ENCODE measurements at regions of chr19 and their contacts with region 1.

Region 1: DNA sequence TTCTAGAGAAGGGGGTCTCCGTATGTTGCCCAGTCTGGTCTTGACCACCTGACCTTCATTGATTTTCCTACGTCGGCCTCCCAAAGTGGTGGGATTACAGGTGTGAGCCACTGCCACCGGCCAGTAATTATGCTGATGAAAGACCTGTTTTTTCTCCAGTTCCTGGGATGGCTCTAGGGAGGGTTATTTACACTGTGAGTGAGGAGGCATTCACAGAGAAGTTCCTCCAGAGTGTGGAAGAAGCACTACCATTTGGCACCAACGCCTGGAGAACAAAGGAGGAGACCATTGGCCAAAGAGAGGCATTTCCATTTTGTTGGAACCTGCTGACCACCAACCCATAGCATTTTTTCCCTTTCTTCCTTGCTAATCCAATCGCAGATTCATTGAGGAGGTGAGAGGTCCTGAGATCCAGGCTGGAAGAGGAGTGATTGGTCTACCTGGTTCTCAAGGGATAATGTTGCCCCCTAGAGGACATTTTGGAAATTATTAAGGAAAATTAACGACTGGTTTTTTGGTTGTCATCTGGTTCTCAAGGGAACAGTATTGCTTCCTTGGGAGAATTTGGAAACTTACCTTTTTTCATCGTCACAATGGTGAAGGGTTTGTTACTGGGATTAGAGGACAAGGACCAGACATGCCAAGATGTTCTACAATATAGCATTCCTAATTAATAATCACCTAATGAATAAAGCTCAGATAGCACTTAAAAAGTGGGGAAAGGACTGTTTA is 5.5 kb upstream of the SAE1 start:
- DNase-seq: no peak
- ATAC-seq: peak; percentile 44 to 85 (median 78)
- H3K4me3 ChIP-seq: no peak overlapping the region
- H3K27ac ChIP-seq: no peak overlapping the region
- H3K4me1 ChIP-seq: peaks cover 0 to 5% (median 0%) of the 10 kb centered on the region in 12 donors
- H3K27me3 ChIP-seq: no peaks in the 10 kb centered on the region
- CTCF ChIP-seq: peak; percentile 58 to 84 (median 73)
- POLR2A ChIP-seq: no peak

Region 2: GRCh38 chr19:46850228-46851203 is 274.6 kb before region 1 on chr19 and contains the start of gene AP2S1:
- intact Hi-C with region 1: loop called in 1 of 10 experiments (anchors 10 kb)
- DNase-seq: peak; percentile 93 to 97 (median 97)
- ATAC-seq: peak; percentile 92 to 97 (median 96)
- H3K4me3 ChIP-seq: peak within 1 kb of the TSS; percentile 66 to 97 (median 79)
- H3K27ac ChIP-seq: peak within 1 kb of the TSS; percentile 40 to 92 (median 86)
- H3K4me1 ChIP-seq: peaks cover 0 to 32% (median 12%) of the 10 kb centered on the region in 12 donors
- H3K27me3 ChIP-seq: no peaks in the 10 kb centered on the region
- CTCF ChIP-seq: peak in 1 of 12 donors; percentile 17
- POLR2A ChIP-seq: peak in 1 of 2 donors; percentile 78
- total RNA-seq, gene AP2S1: 75.3 to 148 (median 84.5) TPM

Region 3: DNA sequence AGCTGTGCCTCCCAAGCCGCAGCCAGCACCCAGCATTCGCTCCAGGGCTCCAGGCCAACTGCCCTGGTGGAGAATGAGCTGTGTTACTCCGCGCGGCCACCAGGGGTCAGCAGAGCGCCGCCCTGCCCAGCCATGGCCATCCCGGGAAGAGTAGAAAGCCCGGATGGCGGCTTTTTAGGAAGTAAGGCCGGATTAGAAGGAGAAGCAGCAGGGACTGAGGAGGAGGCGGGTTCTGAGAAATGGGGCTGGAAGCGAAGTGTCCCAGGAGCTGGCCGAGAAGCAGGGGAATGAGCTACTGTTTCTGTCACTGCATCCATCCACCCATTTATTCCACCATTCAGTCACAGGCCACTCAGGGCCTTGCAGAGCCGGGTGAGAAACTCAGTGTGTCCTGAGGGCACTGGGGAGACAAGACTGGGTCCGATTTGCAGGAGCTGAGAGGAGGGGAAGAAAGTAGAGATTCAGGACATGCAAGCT is 112.0 kb before region 1 on chr19:
- intact Hi-C with region 1: loop called in 6 of 10 experiments (anchors 1 to 5 kb)
- DNase-seq: peak; percentile 77 to 92 (median 86)
- ATAC-seq: peak; percentile 92 to 96 (median 95)
- H3K4me3 ChIP-seq: no peak overlapping the region
- H3K27ac ChIP-seq: no peak overlapping the region
- H3K4me1 ChIP-seq: peaks cover 0 to 8% (median 2%) of the 10 kb centered on the region in 12 donors
- H3K27me3 ChIP-seq: peaks cover 0 to 2% (median 0%) of the 10 kb centered on the region in 9 donors
- CTCF ChIP-seq: peak; percentile 97 to 100 (median 99)
- POLR2A ChIP-seq: no peak

Region 4: DNA sequence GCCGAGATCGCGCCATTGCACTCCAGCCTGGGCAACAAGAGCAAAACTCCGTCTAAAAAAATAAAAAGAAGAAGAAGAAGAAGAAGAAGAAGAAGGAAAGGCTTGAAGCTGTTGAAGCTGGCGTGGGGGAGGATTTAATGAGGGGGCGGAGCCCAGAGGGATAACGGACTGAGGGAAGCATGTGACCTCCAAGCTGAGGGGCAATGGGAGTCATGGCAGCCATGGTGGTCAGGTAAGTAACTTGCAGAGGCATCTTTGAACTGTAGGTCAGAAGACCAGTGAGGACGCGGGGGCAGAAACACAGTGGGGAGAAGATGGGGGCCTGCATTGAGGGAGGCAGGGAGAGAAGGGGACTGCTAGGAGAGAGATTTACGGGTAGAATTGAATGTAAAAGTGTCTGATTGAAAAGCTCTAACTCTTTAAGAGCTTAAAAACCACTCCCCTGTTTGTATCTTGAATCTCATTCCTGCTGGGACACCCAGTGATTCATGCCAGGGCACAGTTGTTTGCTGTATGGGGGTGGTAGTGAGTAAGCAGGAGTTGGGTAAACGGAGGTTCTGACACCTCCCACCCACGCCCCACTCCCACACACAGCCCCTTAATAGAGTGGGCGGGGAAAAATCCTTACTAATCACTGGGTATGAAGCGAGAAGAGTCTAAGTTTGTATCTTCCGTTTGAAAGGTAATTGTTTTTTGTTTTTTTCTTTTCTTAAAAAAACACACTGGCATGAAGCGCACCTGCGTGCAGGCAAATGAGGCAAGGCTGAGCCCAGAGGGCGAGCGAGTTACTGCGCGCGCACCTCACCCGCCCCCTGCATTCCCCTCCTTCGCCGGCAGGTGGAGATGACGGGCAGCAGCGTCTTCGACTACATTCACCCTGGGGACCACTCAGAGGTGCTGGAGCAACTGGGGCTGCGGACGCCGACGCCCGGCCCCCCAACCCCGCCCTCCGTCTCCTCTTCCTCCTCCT is 89.7 kb before region 1 on chr19:
- intact Hi-C with region 1: loop called in 9 of 10 experiments (anchors 1 to 10 kb)
- DNase-seq: peak; percentile 78 to 92 (median 82)
- ATAC-seq: peak; percentile 88 to 94 (median 92)
- H3K4me3 ChIP-seq: peak overlapping the region in 11 of 12 donors; percentile 8 to 60 (median 49)
- H3K27ac ChIP-seq: peak overlapping the region in 1 of 12 donors; percentile 49
- H3K4me1 ChIP-seq: peaks cover 0 to 17% (median 9%) of the 10 kb centered on the region in 12 donors
- H3K27me3 ChIP-seq: peaks cover 0 to 20% (median 0%) of the 10 kb centered on the region in 9 donors
- CTCF ChIP-seq: peak; percentile 94 to 99 (median 97)
- POLR2A ChIP-seq: no peak

Region 5: GRCh38 chr19:47047763-47048405 is 77.2 kb before region 1 on chr19:
- intact Hi-C with region 1: loop called in 1 of 10 experiments (anchors 2 kb)
- DNase-seq: peak; percentile 85 to 89 (median 87)
- ATAC-seq: peak; percentile 67 to 90 (median 84)
- H3K4me3 ChIP-seq: peak overlapping the region; percentile 77 to 99 (median 92)
- H3K27ac ChIP-seq: peak overlapping the region in 11 of 12 donors; percentile 68 to 94 (median 82)
- H3K4me1 ChIP-seq: peaks cover 0 to 14% (median 2%) of the 10 kb centered on the region in 12 donors
- H3K27me3 ChIP-seq: no peaks in the 10 kb centered on the region
- CTCF ChIP-seq: no peak
- POLR2A ChIP-seq: no peak

Region 6: DNA sequence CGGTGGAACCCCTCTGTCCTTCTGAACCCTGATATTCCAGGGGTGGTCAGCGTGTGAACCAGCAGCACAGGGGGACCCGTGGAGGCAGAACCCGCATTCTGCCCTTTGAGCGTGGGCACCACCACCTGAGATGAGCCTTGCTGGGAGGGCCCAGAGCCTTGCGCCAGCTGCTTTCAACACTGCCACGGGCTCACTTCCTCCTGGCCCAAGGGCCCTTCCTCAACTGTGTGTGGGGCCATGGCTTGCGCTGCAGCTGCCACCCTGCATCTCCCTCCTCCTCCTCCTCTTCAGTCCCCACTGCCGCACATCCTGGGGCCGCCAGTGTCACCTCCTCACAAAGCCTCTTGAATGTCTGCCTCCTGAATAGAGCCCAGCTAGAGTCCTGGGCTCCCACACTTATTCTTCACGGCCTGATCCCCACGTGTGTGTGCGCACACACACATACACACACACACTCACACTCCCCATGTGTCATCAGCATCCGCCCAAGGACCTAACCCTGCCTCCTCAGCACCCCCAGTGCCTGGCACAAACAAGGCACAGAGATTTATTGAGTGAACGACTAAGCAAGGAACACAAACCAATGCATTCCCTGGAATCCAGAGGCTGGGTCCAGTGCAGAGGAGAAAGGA is 49.8 kb before region 1 on chr19:
- intact Hi-C with region 1: loop called (anchors 1 to 2 kb)
- DNase-seq: no peak
- ATAC-seq: peak in 1 of 4 donors; percentile 41
- H3K4me3 ChIP-seq: no peak overlapping the region
- H3K27ac ChIP-seq: no peak overlapping the region
- H3K4me1 ChIP-seq: peaks cover 0 to 17% (median 5%) of the 10 kb centered on the region in 12 donors
- H3K27me3 ChIP-seq: no peaks in the 10 kb centered on the region
- CTCF ChIP-seq: no peak
- POLR2A ChIP-seq: no peak

Region 7: DNA sequence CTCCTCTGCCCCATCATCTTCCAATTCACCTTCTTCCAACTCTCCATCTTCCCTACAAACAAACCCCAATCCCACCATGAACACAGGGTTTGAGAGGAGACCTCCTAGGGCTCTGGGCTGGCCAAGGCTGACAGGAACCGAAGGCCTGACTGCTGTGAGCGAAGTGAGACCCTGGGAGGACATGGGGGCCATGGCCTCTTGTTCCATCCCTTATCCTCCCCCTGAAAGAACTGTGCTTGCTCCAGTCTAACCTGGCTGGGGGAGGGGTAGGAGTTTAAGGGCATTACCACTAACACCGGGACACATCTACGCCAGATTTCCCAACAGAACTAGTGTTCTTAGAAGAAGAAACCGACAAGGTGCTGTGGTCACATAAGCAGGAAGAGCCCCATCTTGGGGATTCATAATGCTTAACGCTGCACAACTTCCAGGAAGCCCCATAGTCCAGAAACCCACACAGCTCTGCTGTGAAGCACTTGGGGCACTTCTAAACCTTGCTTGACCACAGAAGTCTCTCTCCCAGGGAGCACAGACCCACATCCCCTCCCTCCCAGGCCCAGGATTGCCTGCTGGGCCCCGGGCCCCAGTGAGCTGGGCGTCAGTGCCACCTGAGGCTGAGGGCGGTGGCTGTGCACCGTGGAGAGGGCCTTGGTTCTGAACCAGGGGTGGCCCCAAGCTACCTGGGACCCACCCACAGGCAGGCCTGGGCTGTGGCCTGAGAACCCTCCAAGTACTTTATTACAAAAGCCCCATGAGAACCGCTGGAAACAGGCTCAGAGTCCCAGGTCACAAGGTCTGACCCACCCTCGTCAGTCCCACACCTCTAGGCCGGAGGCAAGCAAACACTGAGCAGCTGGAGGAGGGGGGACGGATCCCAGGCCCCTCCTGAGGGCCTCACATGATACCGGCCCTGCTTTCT is 30.3 kb before region 1 on chr19:
- intact Hi-C with region 1: no loop called
- DNase-seq: peak in 1 of 5 donors; percentile 49
- ATAC-seq: peak in 1 of 4 donors; percentile 7
- H3K4me3 ChIP-seq: no peak overlapping the region
- H3K27ac ChIP-seq: peak overlapping the region in 8 of 12 donors; percentile 12 to 79 (median 68)
- H3K4me1 ChIP-seq: peaks cover 0 to 58% (median 44%) of the 10 kb centered on the region in 12 donors
- H3K27me3 ChIP-seq: no peaks in the 10 kb centered on the region
- CTCF ChIP-seq: no peak
- POLR2A ChIP-seq: no peak

Measured in heart left ventricle (tissue), 16 donors.